ENCODE measurements at regions of chr3 and their contacts with region 1.

Region 1: GRCh38 chr3:33954956-33955355 is 156.5 kb downstream of the PDCD6IP start:
- DNase-seq: peak; percentile 80
- H3K4me3 ChIP-seq: no peak overlapping the region
- H3K27ac ChIP-seq: peak overlapping the region; percentile 98
- H3K4me1 ChIP-seq: peaks cover 55% of the 10 kb centered on the region
- H3K27me3 ChIP-seq: no peaks in the 10 kb centered on the region
- CTCF ChIP-seq: peak; percentile 66

Region 2: DNA sequence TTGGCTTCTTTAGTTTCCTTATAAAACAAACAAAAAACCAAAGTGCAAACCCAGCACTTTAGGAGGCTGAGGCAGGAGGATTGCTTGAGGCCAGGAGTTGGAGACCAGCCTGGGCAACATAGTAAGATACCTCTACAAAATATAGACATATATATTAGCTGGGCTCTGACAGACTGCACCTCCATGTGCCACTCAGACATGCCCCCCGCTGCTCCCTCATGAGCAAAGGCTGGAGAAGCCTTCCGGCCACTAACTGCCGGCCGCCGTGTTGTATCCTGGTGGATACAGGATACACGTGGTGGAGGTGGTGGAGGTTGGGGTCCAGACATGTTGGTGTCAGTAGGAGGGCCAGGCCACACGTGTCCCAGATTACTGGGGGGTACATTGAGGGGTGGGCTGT is 1032.9 kb before region 1 on chr3:
- CTCF ChIA-PET with region 1: no interaction called
- POLR2A ChIA-PET with region 1: no interaction called
- intact Hi-C with region 1: no loop called
- DNase-seq: no peak
- H3K4me3 ChIP-seq: no peak overlapping the region
- H3K27ac ChIP-seq: no peak overlapping the region
- H3K4me1 ChIP-seq: no peaks in the 10 kb centered on the region
- H3K27me3 ChIP-seq: peaks cover 8% of the 10 kb centered on the region
- CTCF ChIP-seq: no peak

Region 3: GRCh38 chr3:34998905-34999304 is 1043.9 kb after region 1 on chr3:
- CTCF ChIA-PET with region 1: no interaction called
- POLR2A ChIA-PET with region 1: no interaction called
- intact Hi-C with region 1: loop called (anchors 5 kb)
- DNase-seq: peak; percentile 94
- H3K4me3 ChIP-seq: no peak overlapping the region
- H3K27ac ChIP-seq: peak overlapping the region; percentile 97
- H3K4me1 ChIP-seq: peaks cover 76% of the 10 kb centered on the region
- H3K27me3 ChIP-seq: no peaks in the 10 kb centered on the region
- CTCF ChIP-seq: no peak

Measured in A673 (cell line).